ENCODE measurements at regions of chr16 and their contacts with region 1.

Region 1: DNA sequence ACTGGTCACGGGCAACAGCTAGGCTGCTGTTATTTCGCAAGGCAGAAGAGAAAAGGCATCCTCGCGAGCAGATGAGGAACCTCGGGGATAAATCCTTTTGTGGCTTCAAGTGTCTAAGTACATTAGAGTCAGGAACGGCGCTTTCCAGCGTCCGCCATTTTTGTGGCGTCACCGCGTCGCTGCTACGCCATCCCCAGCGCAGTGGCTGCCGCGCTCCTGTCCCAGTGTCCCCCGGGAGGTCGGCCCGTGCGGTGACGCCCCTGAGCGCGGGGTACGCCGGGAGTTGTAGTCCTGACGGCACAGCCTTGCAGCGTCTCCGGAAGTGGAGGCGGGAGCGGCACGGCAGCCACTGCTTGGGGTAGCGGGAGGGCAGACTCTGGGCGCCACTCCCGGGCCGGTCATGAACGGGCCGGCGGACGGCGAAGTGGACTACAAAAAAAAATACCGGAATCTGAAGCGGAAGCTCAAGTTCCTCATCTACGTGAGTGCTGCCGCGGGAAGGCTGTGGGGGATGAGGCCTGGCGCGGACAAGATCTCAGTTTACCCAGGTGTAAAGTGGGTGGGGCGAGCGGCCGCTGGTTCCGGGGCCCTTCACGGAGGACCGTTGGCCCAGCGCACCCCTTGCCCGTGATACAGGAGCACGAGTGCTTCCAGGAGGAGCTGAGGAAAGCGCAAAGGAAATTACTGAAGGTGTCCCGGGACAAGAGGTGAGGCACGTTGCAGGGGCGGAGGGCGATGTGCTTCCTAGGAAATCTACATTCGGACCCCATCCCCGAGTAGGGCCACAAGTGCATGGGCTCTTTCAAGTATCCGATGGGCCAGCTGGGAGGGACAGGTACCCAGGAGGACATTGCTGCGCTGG is at the start of gene INO80E:
- DNase-seq: peak; percentile 96
- H3K4me3 Mint-ChIP-seq: peak within 1 kb of the TSS; percentile 98
- H3K27ac Mint-ChIP-seq: peak within 1 kb of the TSS; percentile 95
- H3K4me1 Mint-ChIP-seq: peaks cover 11% of the 10 kb centered on the region
- H3K27me3 Mint-ChIP-seq: no peaks in the 10 kb centered on the region
- CTCF ChIP-seq: no peak
- total RNA-seq, gene INO80E: 82.0 and 90.1 TPM in 2 replicates

Region 2: GRCh38 chr16:29862884-29863668 is 133.1 kb before region 1 on chr16 and contains the start of gene CDIPT:
- CTCF ChIA-PET with region 1: interaction called, 3 read pairs
- POLR2A ChIA-PET with region 1: interaction called, 8 read pairs
- intact Hi-C with region 1: loop called (anchors 2 kb)
- DNase-seq: peak; percentile 96
- H3K4me3 Mint-ChIP-seq: peak within 1 kb of the TSS; percentile 99
- H3K27ac Mint-ChIP-seq: peak within 1 kb of the TSS; percentile 99
- H3K4me1 Mint-ChIP-seq: peaks cover 14% of the 10 kb centered on the region
- H3K27me3 Mint-ChIP-seq: no peaks in the 10 kb centered on the region
- CTCF ChIP-seq: no peak
- total RNA-seq, gene CDIPT: 41.3 and 42.7 TPM in 2 replicates

Region 3: GRCh38 chr16:29943846-29944669 is 52.1 kb before region 1 on chr16:
- CTCF ChIA-PET with region 1: interaction called, 4 read pairs
- POLR2A ChIA-PET with region 1: interaction called, 10 read pairs
- intact Hi-C with region 1: no loop called
- DNase-seq: peak; percentile 96
- H3K4me3 Mint-ChIP-seq: peak overlapping the region; percentile 24
- H3K27ac Mint-ChIP-seq: peak overlapping the region; percentile 65
- H3K4me1 Mint-ChIP-seq: peaks cover 8% of the 10 kb centered on the region
- H3K27me3 Mint-ChIP-seq: no peaks in the 10 kb centered on the region
- CTCF ChIP-seq: no peak

Region 4: GRCh38 chr16:29961479-29962343 is 34.4 kb before region 1 on chr16 and contains the start of gene TMEM219:
- CTCF ChIA-PET with region 1: no interaction called
- POLR2A ChIA-PET with region 1: interaction called, 11 read pairs
- intact Hi-C with region 1: no loop called
- DNase-seq: peak; percentile 77
- H3K4me3 Mint-ChIP-seq: peak within 1 kb of the TSS; percentile 89
- H3K27ac Mint-ChIP-seq: peak within 1 kb of the TSS; percentile 77
- H3K4me1 Mint-ChIP-seq: peaks cover 16% of the 10 kb centered on the region
- H3K27me3 Mint-ChIP-seq: no peaks in the 10 kb centered on the region
- CTCF ChIP-seq: peak; percentile 14
- total RNA-seq, gene TMEM219: 62.1 and 68.1 TPM in 2 replicates

Measured in MCF 10A (cell line).